Endothelial cell of umbilical vein (primary cell): ENCODE measurements at regions of chr21 and their contacts with region 1.

Region 1: GRCh38 chr21:28568692-28569091 is 424.0 kb downstream of the LTN1 start:
- DNase-seq: no peak
- H3K4me3 ChIP-seq: no peak overlapping the region
- H3K27ac ChIP-seq: no peak overlapping the region
- H3K4me1 ChIP-seq: no peaks in the 10 kb centered on the region
- H3K27me3 ChIP-seq: no peaks in the 10 kb centered on the region
- CTCF ChIP-seq: no peak
- POLR2A ChIP-seq: no peak

Region 2: GRCh38 chr21:28587748-28588147 is 19.1 kb after region 1 on chr21:
- CTCF ChIA-PET with region 1: interaction called, 5 read pairs
- POLR2A ChIA-PET with region 1: no interaction called
- dilution Hi-C with region 1: no loop called
- intact Hi-C with region 1: loop called (anchors 2 kb)
- DNase-seq: no peak
- H3K4me3 ChIP-seq: no peak overlapping the region
- H3K27ac ChIP-seq: no peak overlapping the region
- H3K4me1 ChIP-seq: no peaks in the 10 kb centered on the region
- H3K27me3 ChIP-seq: no peaks in the 10 kb centered on the region
- CTCF ChIP-seq: no peak
- POLR2A ChIP-seq: no peak